Posterior vena cava (tissue), 2 donors: ENCODE measurements at regions of chr12 and their contacts with region 1.

Region 1: DNA sequence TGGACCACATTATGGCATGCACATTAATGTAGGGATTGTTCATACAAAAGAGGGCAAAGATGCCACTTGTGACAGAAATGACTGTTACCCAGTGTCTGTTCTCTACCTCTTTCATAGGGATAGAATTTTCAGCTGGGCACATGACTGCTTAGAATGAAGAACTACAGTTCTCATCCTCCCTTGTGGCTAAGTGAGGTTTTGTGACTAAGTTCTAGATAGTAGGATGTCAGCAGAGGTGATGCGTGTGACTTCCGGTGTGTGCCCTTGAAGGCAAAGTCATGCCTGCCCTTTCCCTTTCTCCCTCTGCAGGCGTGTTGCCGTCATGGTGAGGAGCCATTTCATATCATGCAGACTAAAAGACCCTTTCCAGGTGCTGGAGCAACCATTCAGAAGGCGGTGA is 99.3 kb downstream of the CACNA1C start:
- DNase-seq: no peak

Region 2: DNA sequence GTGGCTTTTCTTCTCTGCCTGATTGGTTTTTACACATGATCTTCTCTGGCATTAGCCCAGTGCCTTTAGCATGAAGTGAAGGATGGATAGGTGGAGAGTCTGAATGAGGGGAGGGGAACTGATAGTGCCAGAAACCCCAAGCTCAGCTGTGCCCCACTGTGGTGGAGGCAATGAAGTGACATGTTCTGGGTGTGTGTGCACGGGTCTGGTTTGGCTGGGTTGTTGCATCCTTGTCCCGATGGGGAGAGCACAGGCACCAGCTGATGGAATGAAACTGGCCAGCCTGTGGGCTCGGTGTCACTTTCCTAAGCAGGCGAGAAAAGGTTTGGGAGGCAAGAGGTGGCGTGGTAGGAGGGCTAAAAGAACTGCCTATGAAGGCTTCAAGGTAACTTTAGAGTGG is 34.1 kb before region 1 on chr12:
- intact Hi-C with region 1: loop called in 1 of 2 experiments (anchors 2 kb)
- DNase-seq: peak; percentile 46